ENCODE measurements at regions of chr3 and their contacts with region 1.

Region 1: GRCh38 chr3:8759038-8759707 is 10.2 kb downstream of the OXTR start:
- DNase-seq: no peak
- ATAC-seq: no peak
- H3K4me3 ChIP-seq: no peak overlapping the region
- H3K27ac ChIP-seq: no peak overlapping the region
- H3K4me1 ChIP-seq: no peaks in the 10 kb centered on the region
- H3K27me3 ChIP-seq: no peaks in the 10 kb centered on the region
- CTCF ChIP-seq: no peak

Region 2: DNA sequence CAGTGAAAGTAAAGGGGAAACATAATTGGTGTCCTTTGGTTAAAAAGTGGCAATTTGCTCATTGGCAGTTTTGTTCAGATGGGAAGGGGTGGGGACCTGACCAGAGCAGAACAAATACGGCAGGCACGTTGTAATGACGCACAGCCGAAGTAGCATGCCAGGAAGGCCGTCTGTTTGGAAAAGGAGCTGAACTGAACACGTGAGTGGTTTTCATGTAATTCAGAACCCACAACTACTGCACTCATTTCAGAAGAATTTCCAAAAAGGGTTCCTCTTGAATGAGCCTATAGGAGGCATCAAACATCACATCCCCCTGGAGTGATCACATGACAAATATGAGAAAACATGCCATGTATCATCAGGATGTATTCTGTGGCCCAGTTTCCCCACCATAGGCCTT is 300.5 kb before region 1 on chr3:
- CTCF ChIA-PET with region 1: no interaction called
- POLR2A ChIA-PET with region 1: no interaction called
- in situ Hi-C with region 1: no loop called
- intact Hi-C with region 1: no loop called
- DNase-seq: no peak
- ATAC-seq: no peak
- H3K4me3 ChIP-seq: no peak overlapping the region
- H3K27ac ChIP-seq: no peak overlapping the region
- H3K4me1 ChIP-seq: no peaks in the 10 kb centered on the region
- H3K27me3 ChIP-seq: no peaks in the 10 kb centered on the region
- CTCF ChIP-seq: no peak

Region 3: GRCh38 chr3:8784676-8785435 is 25.7 kb after region 1 on chr3:
- CTCF ChIA-PET with region 1: no interaction called
- POLR2A ChIA-PET with region 1: no interaction called
- in situ Hi-C with region 1: no loop called
- intact Hi-C with region 1: no loop called
- DNase-seq: no peak
- ATAC-seq: no peak
- H3K4me3 ChIP-seq: no peak overlapping the region
- H3K27ac ChIP-seq: no peak overlapping the region
- H3K4me1 ChIP-seq: no peaks in the 10 kb centered on the region
- H3K27me3 ChIP-seq: no peaks in the 10 kb centered on the region
- CTCF ChIP-seq: no peak

Region 4: DNA sequence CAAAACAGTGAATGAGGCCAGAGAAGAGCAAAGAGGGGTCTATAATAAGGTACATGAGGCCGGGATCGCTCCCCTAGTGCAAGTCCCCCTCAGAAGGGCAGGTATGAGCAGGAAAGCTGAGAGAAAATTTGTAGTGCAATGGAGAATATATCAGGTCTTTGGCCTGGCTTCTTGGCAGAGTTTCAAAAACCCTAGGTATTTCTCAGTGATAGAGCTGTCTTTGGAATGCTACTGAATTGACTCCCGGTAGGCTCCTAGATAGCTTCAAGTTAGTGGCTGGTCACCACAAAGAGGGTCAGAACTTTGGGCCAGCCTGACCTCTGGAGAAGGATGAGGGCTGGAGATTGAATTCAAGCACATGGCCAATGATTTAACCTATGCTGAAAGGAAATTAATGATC is 40.8 kb after region 1 on chr3:
- CTCF ChIA-PET with region 1: no interaction called
- POLR2A ChIA-PET with region 1: interaction called, 10 read pairs
- in situ Hi-C with region 1: no loop called
- intact Hi-C with region 1: no loop called
- DNase-seq: no peak
- ATAC-seq: no peak
- H3K4me3 ChIP-seq: no peak overlapping the region
- H3K27ac ChIP-seq: no peak overlapping the region
- H3K4me1 ChIP-seq: no peaks in the 10 kb centered on the region
- H3K27me3 ChIP-seq: no peaks in the 10 kb centered on the region
- CTCF ChIP-seq: no peak

Region 5: DNA sequence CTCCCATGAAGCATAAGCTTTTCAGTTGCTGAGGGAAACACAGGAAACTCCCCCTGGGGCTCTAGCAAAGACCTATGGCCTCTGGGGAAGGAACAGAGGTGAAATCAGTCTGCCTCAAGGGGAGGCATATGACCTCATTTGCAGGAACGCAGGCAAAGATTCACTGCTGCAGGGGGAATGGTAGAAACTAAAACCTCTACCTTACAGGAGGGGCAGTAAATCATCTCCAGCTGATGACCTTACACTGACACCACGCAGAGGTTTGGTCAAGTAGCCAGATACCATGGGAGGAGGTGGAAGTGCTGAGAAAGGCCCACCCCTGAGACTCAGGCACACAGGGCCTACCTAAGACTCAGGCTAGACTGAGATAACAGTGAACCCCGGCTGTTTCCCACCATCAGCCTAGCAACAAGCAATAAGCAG is 123.0 kb after region 1 on chr3:
- CTCF ChIA-PET with region 1: no interaction called
- POLR2A ChIA-PET with region 1: no interaction called
- in situ Hi-C with region 1: no loop called
- intact Hi-C with region 1: no loop called
- DNase-seq: no peak
- ATAC-seq: no peak
- H3K4me3 ChIP-seq: no peak overlapping the region
- H3K27ac ChIP-seq: no peak overlapping the region
- H3K4me1 ChIP-seq: no peaks in the 10 kb centered on the region
- H3K27me3 ChIP-seq: no peaks in the 10 kb centered on the region
- CTCF ChIP-seq: no peak